Right ventricle myocardium inferior (tissue), 1 donor: ENCODE measurements at regions of chr5 and their contacts with region 1.

Region 1: GRCh38 chr5:32585446-32586275 is at the start of gene SUB1:
- DNase-seq: peak; percentile 98
- ATAC-seq: peak; percentile 97
- total RNA-seq, gene SUB1: 187 TPM

Region 2: DNA sequence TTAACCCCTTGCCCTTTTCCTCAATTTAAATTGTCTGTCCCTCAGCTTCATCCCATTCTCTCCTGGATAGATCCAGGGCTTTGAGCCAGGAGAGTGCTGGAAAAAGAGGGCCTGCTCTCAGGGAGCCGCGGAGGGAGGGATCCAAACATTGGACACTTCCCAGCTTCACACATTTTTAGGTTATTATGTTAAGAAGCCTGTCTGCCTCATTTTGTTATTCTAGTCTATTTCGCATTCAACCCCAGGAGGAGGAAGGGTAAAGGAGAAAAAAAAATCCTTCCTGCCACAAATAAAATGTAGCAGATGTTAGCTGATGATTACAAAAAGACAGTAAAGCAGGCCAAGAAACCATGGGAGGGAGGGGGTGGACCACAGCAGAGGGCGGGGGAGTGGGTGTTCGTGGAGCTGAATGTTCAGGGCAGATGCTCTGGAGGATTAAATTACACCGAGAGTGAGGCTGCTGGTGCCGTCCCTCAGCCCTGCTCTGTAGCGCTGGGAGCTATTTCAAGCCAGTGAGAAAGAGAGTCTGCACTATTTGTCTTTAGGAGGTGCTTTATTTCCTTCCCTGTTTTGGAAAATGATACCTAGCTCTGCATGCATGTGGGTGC is 80.6 kb before region 1 on chr5:
- intact Hi-C with region 1: loop called (anchors 1 kb)
- DNase-seq: no peak
- ATAC-seq: peak; percentile 93